Activated naive CD4-positive, alpha-beta T cell treated with anti-CD3 and anti-CD28 coated beads for 36 hours (primary cell): ENCODE measurements at regions of chr14 and their contacts with region 1.

Region 1: GRCh38 chr14:75497191-75497590 is 25.1 kb upstream of the BATF start:
- DNase-seq: no peak
- H3K4me3 Mint-ChIP-seq: no peak overlapping the region
- H3K27ac Mint-ChIP-seq: no peak overlapping the region
- H3K4me1 Mint-ChIP-seq: peaks cover 30% of the 10 kb centered on the region
- H3K27me3 Mint-ChIP-seq: no peaks in the 10 kb centered on the region

Region 2: DNA sequence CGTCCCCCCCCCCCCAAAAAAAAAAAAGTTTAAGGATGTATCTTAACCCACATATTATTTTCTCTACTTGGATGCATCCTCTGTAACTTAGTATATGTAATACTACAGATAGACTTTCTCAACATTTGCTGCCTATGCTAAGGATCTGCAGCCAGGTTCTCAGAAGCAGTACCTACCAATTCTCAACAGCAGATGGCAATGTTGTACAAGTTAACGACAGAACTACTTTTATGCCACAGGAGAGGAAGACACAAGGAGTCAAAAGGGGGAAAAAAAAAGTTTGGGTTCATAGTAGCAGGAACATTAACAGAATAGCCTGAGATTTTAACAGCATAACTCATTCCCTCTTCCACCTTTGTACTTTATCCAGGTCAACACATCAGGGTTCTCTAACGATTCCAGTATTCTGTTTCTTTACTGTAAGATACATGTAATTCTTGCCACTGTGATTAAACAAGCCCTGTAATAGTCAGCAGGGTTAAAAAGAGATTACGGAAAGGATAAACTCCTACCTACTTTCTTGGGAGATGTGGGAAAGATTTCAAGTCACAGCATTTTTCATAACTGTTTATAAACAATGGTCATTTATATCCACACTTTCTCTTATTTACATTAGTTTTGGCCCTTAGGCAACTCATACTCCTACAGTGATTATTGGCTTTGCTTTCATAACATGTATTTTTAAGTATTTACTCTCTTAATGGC is 364.7 kb before region 1 on chr14:
- CTCF ChIA-PET with region 1: no interaction called
- intact Hi-C with region 1: loop called (anchors 2 kb)
- DNase-seq: peak; percentile 64
- H3K4me3 Mint-ChIP-seq: no peak overlapping the region
- H3K27ac Mint-ChIP-seq: peak overlapping the region; percentile 24
- H3K4me1 Mint-ChIP-seq: peaks cover 19% of the 10 kb centered on the region
- H3K27me3 Mint-ChIP-seq: no peaks in the 10 kb centered on the region

Region 3: DNA sequence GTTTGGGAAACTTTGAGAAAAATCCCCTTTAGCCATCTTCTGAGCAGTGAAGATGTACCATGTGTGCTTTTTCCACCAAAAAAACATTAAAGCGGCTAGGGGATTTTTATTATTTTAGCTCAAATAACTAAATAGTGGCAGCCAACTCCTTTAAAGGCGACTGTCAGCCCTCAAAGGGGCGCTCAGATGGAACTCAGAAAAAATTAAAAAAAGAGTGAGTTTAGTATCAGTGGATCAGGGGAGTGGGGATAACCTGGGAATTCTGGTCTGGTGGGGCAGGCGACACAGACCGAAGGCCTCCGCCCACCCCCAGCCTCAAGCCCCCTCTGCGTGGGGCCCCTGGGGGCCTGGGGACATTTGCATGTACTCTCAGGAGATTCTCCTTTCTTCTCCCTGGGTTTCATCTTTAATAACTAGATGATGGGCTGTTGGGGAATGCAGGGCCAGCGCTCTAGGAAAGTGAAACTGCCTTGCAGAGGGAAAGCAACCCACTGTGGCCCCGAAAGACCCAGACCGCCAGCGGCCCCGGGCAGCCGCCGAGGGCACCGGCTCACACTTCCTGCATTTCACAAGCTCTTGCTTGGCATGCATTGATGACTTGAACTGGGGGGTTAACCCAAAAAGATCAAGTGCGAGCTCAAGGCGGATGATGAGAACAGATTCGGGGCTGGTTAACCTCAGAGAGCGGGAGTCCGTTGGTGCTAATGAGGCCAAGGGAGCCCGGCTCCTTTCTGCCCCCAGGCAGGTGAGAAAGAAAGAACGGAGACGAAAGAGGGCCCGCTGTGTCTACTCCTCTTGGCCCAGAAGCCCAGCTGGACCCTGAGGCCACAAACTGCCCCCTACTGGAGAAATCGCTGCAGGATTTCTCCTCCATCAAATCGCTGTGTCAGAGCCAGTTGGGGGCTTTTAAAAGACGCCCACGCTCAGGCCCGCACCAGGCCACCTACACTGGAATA is 17.8 kb after region 1 on chr14:
- CTCF ChIA-PET with region 1: interaction called, 23 read pairs
- intact Hi-C with region 1: loop called (anchors 1 kb)
- DNase-seq: peak; percentile 73
- H3K4me3 Mint-ChIP-seq: peak overlapping the region; percentile 70
- H3K27ac Mint-ChIP-seq: peak overlapping the region; percentile 89
- H3K4me1 Mint-ChIP-seq: peaks cover 58% of the 10 kb centered on the region
- H3K27me3 Mint-ChIP-seq: no peaks in the 10 kb centered on the region